Cardiac septum (tissue), 1 donor: ENCODE measurements at regions of chr4 and their contacts with region 1.

Region 1: GRCh38 chr4:55175779-55176231 is 50.4 kb upstream of the KDR start:
- DNase-seq: no peak

Region 2: DNA sequence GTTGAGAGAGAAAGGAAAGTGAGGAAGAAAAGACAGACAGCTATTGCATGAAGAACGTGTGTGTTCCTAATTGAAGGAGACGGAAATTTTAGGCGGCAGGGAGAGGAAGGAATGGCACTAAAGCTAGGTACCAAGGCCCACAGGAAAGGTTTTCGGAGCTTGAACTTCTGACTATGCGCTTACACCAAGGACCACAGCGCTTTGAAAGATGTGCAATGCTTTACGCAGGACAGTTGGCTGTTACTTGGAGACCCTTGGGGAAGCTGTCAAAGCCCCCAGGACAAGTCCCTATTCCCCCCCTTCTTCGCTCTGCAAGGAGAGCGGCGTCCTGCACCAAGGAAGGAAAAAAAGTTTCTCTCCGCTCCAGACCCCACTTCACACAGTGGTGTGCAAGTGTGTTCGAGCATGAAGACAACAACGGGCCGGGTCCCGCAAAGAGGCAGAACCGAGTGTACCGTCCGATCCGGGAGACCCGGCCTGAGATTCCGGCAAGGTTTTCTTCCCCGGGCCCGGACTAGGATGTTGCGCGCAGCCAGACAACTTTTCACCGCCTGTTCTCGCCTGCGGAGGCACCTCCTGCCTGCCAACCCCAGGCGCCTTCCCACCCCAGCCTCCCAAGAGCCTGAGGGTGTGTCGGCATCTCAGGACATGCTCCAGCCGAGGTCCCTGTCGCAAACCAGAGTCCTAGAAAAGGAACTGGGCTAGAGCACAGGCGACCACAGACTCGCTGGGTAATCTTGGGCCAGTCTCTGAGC is 51.3 kb before region 1 on chr4:
- intact Hi-C with region 1: loop called (anchors 5 kb)
- DNase-seq: no peak